GM12878 (cell line): ENCODE measurements at regions of chr9 and their contacts with region 1.

Region 1: DNA sequence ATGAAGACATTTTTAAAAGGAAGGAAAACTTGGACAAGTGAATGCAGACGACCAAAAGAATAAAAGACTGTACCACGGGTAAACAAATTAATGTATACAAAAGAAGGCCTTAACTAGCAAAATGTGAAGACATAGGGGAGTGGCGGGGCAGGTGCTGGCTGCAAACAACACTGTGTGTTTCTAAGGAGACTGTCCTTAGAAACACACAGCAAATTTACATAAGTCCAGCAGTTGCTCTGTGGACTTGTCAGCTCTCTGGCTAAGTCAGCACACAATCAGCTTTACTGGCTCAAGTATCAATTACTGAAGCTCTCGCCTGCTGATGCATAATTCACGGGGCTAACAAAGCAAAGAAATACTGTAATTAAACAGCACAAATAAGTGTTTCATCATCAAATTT is 24.8 kb downstream of the PTBP3 start:
- DNase-seq: no peak
- ATAC-seq: no peak
- H3K4me3 ChIP-seq: no peak overlapping the region
- H3K27ac ChIP-seq: no peak overlapping the region
- H3K4me1 ChIP-seq: no peaks in the 10 kb centered on the region
- H3K27me3 ChIP-seq: no peaks in the 10 kb centered on the region
- CTCF ChIP-seq: no peak
- EP300 ChIP-seq: no peak
- POLR2A ChIP-seq: no peak
- RAD21 ChIP-seq: no peak

Region 2: DNA sequence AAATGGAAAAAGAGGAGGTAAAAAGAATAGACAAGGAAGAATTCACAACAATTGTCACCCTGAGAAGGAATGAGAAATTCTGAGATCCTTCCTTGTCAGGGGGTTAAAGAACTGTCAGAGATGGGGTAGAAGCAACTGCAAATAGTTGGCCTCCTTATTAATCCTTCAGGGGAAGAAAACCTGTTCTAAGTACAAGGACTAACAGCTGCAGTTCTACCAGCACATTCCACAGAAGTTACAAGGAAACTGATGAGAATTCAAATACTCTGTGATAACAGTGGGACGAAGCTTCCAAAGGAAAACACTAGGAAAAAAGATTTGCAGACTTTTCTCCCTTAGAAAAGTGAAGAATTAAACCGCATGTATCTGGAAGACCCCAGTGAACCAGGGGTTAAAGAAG is 1072.3 kb before region 1 on chr9:
- CTCF ChIA-PET with region 1: no interaction called
- POLR2A ChIA-PET with region 1: no interaction called
- RAD21 ChIA-PET with region 1: no interaction called
- SMC1A ChIA-PET with region 1: no interaction called
- in situ Hi-C with region 1: no loop called
- intact Hi-C with region 1: no loop called
- DNase-seq: no peak
- ATAC-seq: no peak
- H3K4me3 ChIP-seq: no peak overlapping the region
- H3K27ac ChIP-seq: no peak overlapping the region
- H3K4me1 ChIP-seq: no peaks in the 10 kb centered on the region
- H3K27me3 ChIP-seq: no peaks in the 10 kb centered on the region
- CTCF ChIP-seq: no peak
- EP300 ChIP-seq: no peak
- POLR2A ChIP-seq: no peak
- RAD21 ChIP-seq: no peak

Region 3: DNA sequence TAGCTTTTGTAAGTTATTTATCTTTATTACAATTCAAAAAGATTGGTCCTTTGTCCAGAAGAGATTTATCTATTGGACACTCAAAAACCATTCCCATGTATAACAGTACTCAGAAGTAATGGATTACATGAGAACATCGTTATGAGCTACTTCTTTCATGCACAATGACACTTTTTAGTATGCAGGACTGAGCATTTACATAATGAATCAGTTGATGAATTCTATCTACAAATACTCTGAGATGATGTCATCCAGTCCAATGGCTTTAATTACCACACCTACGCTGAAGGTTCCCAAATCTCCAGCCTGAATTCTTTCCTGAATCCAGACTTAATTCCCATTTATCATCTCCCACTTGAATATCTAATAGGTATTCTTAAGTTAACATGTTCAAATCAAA is 50.5 kb before region 1 on chr9:
- CTCF ChIA-PET with region 1: no interaction called
- POLR2A ChIA-PET with region 1: no interaction called
- RAD21 ChIA-PET with region 1: no interaction called
- SMC1A ChIA-PET with region 1: no interaction called
- in situ Hi-C with region 1: loop called (anchors 5 kb)
- intact Hi-C with region 1: no loop called
- DNase-seq: no peak
- ATAC-seq: no peak
- H3K4me3 ChIP-seq: no peak overlapping the region
- H3K27ac ChIP-seq: no peak overlapping the region
- H3K4me1 ChIP-seq: no peaks in the 10 kb centered on the region
- H3K27me3 ChIP-seq: no peaks in the 10 kb centered on the region
- CTCF ChIP-seq: no peak
- EP300 ChIP-seq: no peak
- POLR2A ChIP-seq: no peak
- RAD21 ChIP-seq: no peak